HEK293 (cell line): ENCODE measurements at regions of chr15 and their contacts with region 1.

Region 1: GRCh38 chr15:74420197-74420898 is 13.4 kb downstream of the SEMA7A start:
- H3K4me3 ChIP-seq: no peak overlapping the region
- H3K27ac ChIP-seq: no peak overlapping the region
- H3K4me1 ChIP-seq: no peaks in the 10 kb centered on the region
- CTCF ChIP-seq: no peak

Region 2: GRCh38 chr15:74460871-74461846 is 40.8 kb after region 1 on chr15 and contains the start of gene UBL7:
- CTCF ChIA-PET with region 1: no interaction called
- POLR2A ChIA-PET with region 1: interaction called, 11 read pairs
- H3K4me3 ChIP-seq: peak within 1 kb of the TSS; percentile 91
- H3K27ac ChIP-seq: peak within 1 kb of the TSS; percentile 91
- H3K4me1 ChIP-seq: peaks cover 2% of the 10 kb centered on the region; the same call in 1 of the 2 replicates
- CTCF ChIP-seq: peak; percentile 85

Region 3: GRCh38 chr15:74497584-74497983 is 77.2 kb after region 1 on chr15:
- CTCF ChIA-PET with region 1: no interaction called
- POLR2A ChIA-PET with region 1: no interaction called
- H3K4me3 ChIP-seq: no peak overlapping the region
- H3K27ac ChIP-seq: no peak overlapping the region
- H3K4me1 ChIP-seq: peaks cover 3% of the 10 kb centered on the region; the same call in 1 of the 2 replicates
- CTCF ChIP-seq: no peak